Transverse colon (tissue), 4 donors: ENCODE measurements at regions of chr10 and their contacts with region 1.

Region 1: DNA sequence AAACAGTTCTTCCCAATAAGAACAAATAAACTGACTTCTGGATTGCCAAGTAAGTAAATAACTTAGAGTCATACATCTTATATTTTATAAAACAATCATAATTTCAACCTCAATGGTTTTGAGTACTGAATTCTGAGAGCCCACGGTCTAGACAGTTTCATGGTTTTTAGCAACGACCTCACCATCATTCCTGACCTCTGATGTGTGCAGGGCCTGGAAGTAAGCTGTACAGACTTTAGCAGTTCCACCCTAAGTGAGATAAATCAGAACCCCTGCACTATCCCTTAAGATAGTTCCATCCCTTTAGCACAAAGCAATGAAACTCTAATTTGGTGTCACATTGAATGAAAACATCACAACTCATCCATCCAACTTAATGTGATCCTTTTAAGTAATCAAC is 86.0 kb downstream of the NEBL start:
- DNase-seq: no peak
- H3K4me3 ChIP-seq: no peak overlapping the region
- H3K27ac ChIP-seq: no peak overlapping the region
- H3K4me1 ChIP-seq: no peaks in the 10 kb centered on the region
- H3K27me3 ChIP-seq: no peaks in the 10 kb centered on the region
- CTCF ChIP-seq: no peak
- EP300 ChIP-seq: no peak
- POLR2A ChIP-seq: no peak

Region 2: GRCh38 chr10:21702633-21703111 is 891.5 kb after region 1 on chr10:
- in situ Hi-C with region 1: no loop called
- intact Hi-C with region 1: loop called (anchors 5 kb)
- DNase-seq: no peak
- H3K4me3 ChIP-seq: no peak overlapping the region
- H3K27ac ChIP-seq: no peak overlapping the region
- H3K4me1 ChIP-seq: no peaks in the 10 kb centered on the region
- H3K27me3 ChIP-seq: no peaks in the 10 kb centered on the region
- CTCF ChIP-seq: no peak
- EP300 ChIP-seq: no peak
- POLR2A ChIP-seq: no peak